Activated B cell treated with CpG ODN at 0.5 μM for 24 hours (primary cell): ENCODE measurements at regions of chr5 and their contacts with region 1.

Region 1: GRCh38 chr5:41843456-41844370 is 26.5 kb downstream of the OXCT1 start:
- DNase-seq: no peak
- ATAC-seq: no peak
- H3K4me3 Mint-ChIP-seq: no peak overlapping the region
- H3K27ac Mint-ChIP-seq: no peak overlapping the region
- H3K4me1 Mint-ChIP-seq: peaks cover 3% of the 10 kb centered on the region
- H3K27me3 Mint-ChIP-seq: no peaks in the 10 kb centered on the region
- CTCF ChIP-seq: no peak

Region 2: DNA sequence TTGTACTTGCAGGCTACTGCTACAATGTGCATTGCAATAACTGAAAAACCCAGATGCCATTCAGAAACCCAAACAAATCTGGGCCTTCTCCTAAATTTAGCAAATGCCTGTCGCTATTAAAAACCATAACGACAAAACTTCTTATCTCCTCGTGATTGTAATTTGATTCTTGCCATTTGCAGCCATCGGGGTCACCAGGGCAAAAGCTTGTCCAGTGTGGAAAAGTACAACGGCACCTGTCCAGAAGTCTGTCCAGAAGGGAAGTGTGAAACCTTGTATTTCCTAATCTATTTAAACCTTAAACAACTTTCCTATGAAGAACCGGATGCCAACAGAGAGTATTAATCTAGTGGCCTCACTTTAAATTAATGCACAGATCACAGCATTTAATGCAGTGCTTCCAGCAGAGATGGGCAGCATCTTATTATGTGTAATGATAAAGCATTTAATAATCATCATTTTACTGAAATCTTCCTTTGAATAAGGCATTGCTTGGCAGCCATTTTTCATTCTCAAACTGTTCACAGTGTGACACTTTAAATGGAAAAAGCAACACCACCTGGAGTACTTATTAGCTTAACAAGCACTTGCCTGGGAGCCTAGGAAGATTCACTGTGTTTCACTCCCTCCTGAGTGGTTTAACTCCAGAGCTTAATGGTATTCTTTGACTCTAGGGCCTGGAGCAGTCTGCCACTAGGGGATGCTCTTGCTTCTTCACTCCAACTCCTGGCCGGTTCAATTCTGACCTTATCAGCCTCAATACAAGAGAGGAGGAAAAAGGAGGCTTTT is 939.3 kb before region 1 on chr5:
- CTCF ChIA-PET with region 1: no interaction called
- POLR2A ChIA-PET with region 1: no interaction called
- intact Hi-C with region 1: loop called (anchors 1 kb)
- DNase-seq: no peak
- ATAC-seq: no peak
- H3K4me3 Mint-ChIP-seq: no peak overlapping the region
- H3K27ac Mint-ChIP-seq: no peak overlapping the region
- H3K4me1 Mint-ChIP-seq: no peaks in the 10 kb centered on the region
- H3K27me3 Mint-ChIP-seq: peaks cover 5% of the 10 kb centered on the region
- CTCF ChIP-seq: no peak

Region 3: DNA sequence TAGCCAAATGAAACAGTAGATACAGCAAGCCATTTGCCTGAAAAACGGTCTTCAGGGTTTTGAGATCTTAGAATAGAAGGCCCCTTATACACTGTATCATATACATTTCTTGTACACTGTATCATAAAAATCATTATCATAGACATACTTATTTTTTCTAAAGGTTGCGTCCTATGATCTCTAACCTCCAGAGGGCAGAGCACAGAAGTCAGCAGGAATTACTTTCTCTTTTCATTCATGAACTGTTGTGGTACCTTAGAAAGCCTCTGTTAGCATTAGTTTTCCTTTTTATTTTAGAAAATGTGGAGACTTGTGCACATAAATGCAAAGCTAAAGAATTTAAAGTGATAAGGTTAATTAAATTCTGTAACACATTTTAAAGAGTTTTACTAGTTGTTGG is 88.9 kb before region 1 on chr5:
- CTCF ChIA-PET with region 1: no interaction called
- POLR2A ChIA-PET with region 1: no interaction called
- intact Hi-C with region 1: loop called (anchors 5 kb)
- DNase-seq: no peak
- ATAC-seq: no peak
- H3K4me3 Mint-ChIP-seq: no peak overlapping the region
- H3K27ac Mint-ChIP-seq: no peak overlapping the region
- H3K4me1 Mint-ChIP-seq: no peaks in the 10 kb centered on the region
- H3K27me3 Mint-ChIP-seq: no peaks in the 10 kb centered on the region
- CTCF ChIP-seq: no peak

Region 4: GRCh38 chr5:42315214-42315613 is 471.5 kb after region 1 on chr5:
- CTCF ChIA-PET with region 1: no interaction called
- POLR2A ChIA-PET with region 1: no interaction called
- intact Hi-C with region 1: no loop called
- DNase-seq: no peak
- ATAC-seq: no peak
- H3K4me3 Mint-ChIP-seq: no peak overlapping the region
- H3K27ac Mint-ChIP-seq: no peak overlapping the region
- H3K4me1 Mint-ChIP-seq: no peaks in the 10 kb centered on the region
- H3K27me3 Mint-ChIP-seq: no peaks in the 10 kb centered on the region
- CTCF ChIP-seq: no peak